Right ventricle myocardium superior (tissue), 1 donor: ENCODE measurements at regions of chr5 and their contacts with region 1.

Region 1: DNA sequence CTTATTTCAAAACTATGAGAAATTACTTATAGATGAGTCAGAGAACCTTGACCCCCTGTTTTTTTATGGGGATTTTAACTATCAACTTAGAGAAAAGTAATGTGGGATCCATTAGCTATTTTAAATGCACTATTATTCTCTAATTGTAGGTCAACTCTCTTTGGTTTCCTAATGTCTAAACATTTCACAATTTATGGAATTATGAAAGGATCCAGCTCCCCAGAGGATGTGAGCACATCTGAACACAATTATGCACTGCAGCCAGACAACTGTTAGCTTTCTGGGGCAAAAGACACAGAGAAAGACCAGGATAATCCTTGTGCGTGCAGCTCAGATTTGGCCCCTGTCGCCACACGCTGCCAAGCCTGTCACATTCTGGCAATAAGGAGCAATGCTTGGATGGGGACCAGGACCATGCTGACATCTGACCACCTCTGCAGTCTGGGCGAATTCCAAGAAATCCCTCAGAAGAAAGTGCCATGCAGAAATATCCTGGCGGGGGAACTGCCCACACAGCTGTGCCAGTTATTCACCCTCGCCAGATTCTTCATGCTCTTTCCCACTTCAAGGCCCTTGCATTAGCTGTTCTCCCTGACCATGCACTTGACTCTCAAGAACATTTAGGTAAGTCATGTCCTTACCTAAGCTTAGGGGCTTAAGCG is 22.2 kb upstream of the CMBL start:
- DNase-seq: peak; percentile 72
- ATAC-seq: peak; percentile 48

Region 2: DNA sequence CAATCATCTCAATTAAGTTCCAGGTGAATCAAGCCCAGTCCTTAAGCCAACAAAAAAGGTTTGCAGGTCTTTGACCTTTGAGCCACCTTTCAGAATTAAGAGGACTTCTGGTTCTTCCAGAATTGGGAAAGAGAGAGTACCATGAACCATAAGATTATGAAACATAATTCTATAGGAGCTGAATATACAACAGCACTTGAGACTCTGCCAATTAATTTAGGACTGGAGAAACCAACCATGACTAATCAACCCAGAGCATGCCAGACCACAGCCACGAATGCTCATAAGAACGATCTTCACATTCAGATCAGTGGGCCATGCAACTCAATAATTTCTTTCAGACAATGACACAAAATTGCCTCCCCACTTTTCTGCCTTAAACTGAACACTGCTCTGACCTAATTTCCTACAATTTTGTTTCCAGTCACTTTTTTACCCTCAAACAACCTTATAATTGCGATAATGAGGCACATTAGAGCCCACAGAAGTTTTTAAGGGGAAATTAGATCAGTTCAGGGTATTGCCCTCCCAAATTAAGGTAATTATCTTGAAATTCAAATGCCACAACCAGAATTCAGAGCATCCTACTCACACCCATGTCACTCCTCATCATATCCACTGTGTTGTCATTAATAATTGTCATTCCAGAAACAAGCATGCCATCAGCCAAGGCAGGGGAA is 293.7 kb before region 1 on chr5:
- intact Hi-C with region 1: no loop called
- DNase-seq: no peak
- ATAC-seq: no peak

Region 3: GRCh38 chr5:10262121-10262774 is 67.7 kb before region 1 on chr5:
- intact Hi-C with region 1: no loop called
- DNase-seq: no peak
- ATAC-seq: peak; percentile 29

Region 4: DNA sequence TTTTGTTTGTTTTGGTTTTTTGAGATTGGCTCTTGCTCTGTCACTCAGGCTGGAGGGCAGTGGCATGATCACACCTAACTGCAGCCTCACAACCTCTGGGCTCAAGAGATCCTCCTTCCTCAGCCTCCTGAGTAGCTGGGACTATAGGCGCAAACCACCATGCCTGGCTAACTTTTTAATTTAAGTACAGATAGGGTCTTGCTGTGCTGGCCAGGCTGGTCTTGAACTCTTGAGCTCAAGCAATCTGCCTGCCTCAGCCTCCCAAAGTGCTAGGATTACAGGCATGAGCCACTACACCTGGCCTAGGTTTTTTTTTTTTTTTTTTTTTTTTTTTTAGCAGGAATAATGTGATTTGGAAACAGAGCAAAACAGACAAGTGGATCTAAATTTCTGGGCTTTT is 61.2 kb after region 1 on chr5:
- intact Hi-C with region 1: no loop called
- DNase-seq: no peak
- ATAC-seq: no peak

Region 5: DNA sequence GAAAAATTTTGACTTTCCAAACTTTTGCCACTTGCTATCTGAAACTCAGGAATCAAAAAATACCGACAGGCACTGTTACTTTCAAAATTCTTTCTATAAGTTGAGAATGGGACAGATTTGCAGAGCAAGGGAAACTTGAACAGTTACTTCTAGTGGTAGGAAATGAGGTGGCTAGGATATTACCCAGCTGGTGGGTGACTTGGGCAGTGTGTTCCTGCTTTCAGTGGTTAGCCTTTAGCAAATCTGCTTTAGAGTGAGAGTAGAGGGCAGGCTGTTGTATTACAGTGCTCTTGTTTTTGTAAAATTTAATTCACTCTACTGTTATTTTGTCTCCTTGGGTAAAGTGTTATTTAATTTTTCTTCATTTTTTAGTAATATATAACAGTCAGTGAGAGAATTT is 71.5 kb after region 1 on chr5:
- intact Hi-C with region 1: loop called (anchors 10 kb)
- DNase-seq: no peak
- ATAC-seq: no peak